ENCODE measurements at regions of chr15 and their contacts with region 1.

Region 1: GRCh38 chr15:98177924-98178592 is 217.6 kb downstream of the ARRDC4 start:
- DNase-seq: peak; percentile 36
- ATAC-seq: no peak
- H3K4me3 ChIP-seq: no peak overlapping the region
- H3K4me3 Mint-ChIP-seq: no peak overlapping the region
- H3K27ac ChIP-seq: no peak overlapping the region
- H3K27ac Mint-ChIP-seq: no peak overlapping the region
- H3K4me1 ChIP-seq: no peaks in the 10 kb centered on the region
- H3K4me1 Mint-ChIP-seq: no peaks in the 10 kb centered on the region
- H3K27me3 ChIP-seq: no peaks in the 10 kb centered on the region
- H3K27me3 Mint-ChIP-seq: peaks cover 8% of the 10 kb centered on the region
- CTCF ChIP-seq: peak; percentile 52

Region 2: DNA sequence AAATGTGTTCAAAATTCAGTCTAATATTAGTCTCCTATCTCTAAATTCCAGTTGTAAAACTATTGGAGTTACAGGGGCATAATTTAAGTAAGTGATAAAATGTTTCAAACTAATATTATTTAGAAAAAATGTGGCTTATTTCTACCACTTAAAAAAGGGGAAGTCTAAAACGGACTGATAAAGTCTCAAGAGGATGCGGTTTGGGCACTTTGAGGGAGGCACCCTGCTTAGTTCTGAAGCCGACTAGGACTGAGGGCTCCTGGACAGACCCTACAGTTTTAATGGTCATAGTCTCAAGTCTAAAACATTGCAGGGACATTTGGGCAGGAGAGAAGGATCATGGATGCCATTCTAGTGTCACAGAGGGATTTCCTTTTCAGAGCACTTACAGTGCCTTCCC is 1281.3 kb before region 1 on chr15:
- CTCF ChIA-PET with region 1: no interaction called
- POLR2A ChIA-PET with region 1: no interaction called
- intact Hi-C with region 1: no loop called
- DNase-seq: no peak
- ATAC-seq: no peak
- H3K4me3 ChIP-seq: no peak overlapping the region
- H3K4me3 Mint-ChIP-seq: no peak overlapping the region
- H3K27ac ChIP-seq: no peak overlapping the region
- H3K27ac Mint-ChIP-seq: no peak overlapping the region
- H3K4me1 ChIP-seq: no peaks in the 10 kb centered on the region
- H3K4me1 Mint-ChIP-seq: no peaks in the 10 kb centered on the region
- H3K27me3 ChIP-seq: no peaks in the 10 kb centered on the region
- H3K27me3 Mint-ChIP-seq: no peaks in the 10 kb centered on the region
- CTCF ChIP-seq: no peak

Region 3: GRCh38 chr15:97903971-97904572 is 274.0 kb before region 1 on chr15:
- CTCF ChIA-PET with region 1: interaction called, 12 read pairs
- POLR2A ChIA-PET with region 1: no interaction called
- intact Hi-C with region 1: loop called (anchors 2 kb)
- DNase-seq: no peak
- ATAC-seq: no peak
- H3K4me3 ChIP-seq: no peak overlapping the region
- H3K4me3 Mint-ChIP-seq: no peak overlapping the region
- H3K27ac ChIP-seq: no peak overlapping the region
- H3K27ac Mint-ChIP-seq: no peak overlapping the region
- H3K4me1 ChIP-seq: no peaks in the 10 kb centered on the region
- H3K4me1 Mint-ChIP-seq: peaks cover 2% of the 10 kb centered on the region
- H3K27me3 ChIP-seq: peaks cover 0 to 16% (median 4%) of the 10 kb centered on the region in 4 experiments
- H3K27me3 Mint-ChIP-seq: peaks cover 33% of the 10 kb centered on the region
- CTCF ChIP-seq: no peak

Region 4: GRCh38 chr15:97909291-97909891 is 268.7 kb before region 1 on chr15:
- CTCF ChIA-PET with region 1: interaction called, 12 read pairs
- POLR2A ChIA-PET with region 1: no interaction called
- intact Hi-C with region 1: loop called (anchors 2 kb)
- DNase-seq: peak; percentile 59
- ATAC-seq: peak; percentile 81
- H3K4me3 ChIP-seq: no peak overlapping the region
- H3K4me3 Mint-ChIP-seq: no peak overlapping the region
- H3K27ac ChIP-seq: no peak overlapping the region
- H3K27ac Mint-ChIP-seq: no peak overlapping the region
- H3K4me1 ChIP-seq: no peaks in the 10 kb centered on the region
- H3K4me1 Mint-ChIP-seq: peaks cover 2% of the 10 kb centered on the region
- H3K27me3 ChIP-seq: peaks cover 0 to 3% (median 0%) of the 10 kb centered on the region in 4 experiments
- H3K27me3 Mint-ChIP-seq: peaks cover 13% of the 10 kb centered on the region
- CTCF ChIP-seq: peak; percentile 78

Region 5: DNA sequence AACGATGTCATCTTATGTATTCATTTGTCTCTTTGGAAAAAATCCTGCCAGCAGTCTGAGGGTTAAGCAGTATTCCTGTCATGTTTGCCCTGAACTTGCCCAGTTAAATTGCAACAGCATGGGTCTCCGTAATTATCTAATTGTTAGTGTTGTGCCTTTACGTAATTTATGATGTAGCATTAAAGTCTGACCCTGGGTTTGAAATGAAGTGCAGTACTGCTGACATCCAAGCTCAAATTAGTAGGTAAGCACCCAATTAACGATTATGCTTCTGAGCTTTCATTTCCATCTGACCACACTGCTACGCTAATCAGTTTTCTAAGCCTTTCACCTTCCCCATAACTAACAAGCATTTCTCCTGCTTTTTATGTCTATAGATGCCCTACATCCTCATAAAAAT is 24.2 kb after region 1 on chr15:
- CTCF ChIA-PET with region 1: no interaction called
- POLR2A ChIA-PET with region 1: no interaction called
- intact Hi-C with region 1: no loop called
- DNase-seq: no peak
- ATAC-seq: no peak
- H3K4me3 ChIP-seq: no peak overlapping the region
- H3K4me3 Mint-ChIP-seq: no peak overlapping the region
- H3K27ac ChIP-seq: no peak overlapping the region
- H3K27ac Mint-ChIP-seq: no peak overlapping the region
- H3K4me1 ChIP-seq: no peaks in the 10 kb centered on the region
- H3K4me1 Mint-ChIP-seq: no peaks in the 10 kb centered on the region
- H3K27me3 ChIP-seq: peaks cover 0 to 5% (median 0%) of the 10 kb centered on the region in 4 experiments
- H3K27me3 Mint-ChIP-seq: no peaks in the 10 kb centered on the region
- CTCF ChIP-seq: no peak

Measured in B cell (primary cell).